B cell (primary cell): ENCODE measurements at regions of chr16 and their contacts with region 1.

Region 1: DNA sequence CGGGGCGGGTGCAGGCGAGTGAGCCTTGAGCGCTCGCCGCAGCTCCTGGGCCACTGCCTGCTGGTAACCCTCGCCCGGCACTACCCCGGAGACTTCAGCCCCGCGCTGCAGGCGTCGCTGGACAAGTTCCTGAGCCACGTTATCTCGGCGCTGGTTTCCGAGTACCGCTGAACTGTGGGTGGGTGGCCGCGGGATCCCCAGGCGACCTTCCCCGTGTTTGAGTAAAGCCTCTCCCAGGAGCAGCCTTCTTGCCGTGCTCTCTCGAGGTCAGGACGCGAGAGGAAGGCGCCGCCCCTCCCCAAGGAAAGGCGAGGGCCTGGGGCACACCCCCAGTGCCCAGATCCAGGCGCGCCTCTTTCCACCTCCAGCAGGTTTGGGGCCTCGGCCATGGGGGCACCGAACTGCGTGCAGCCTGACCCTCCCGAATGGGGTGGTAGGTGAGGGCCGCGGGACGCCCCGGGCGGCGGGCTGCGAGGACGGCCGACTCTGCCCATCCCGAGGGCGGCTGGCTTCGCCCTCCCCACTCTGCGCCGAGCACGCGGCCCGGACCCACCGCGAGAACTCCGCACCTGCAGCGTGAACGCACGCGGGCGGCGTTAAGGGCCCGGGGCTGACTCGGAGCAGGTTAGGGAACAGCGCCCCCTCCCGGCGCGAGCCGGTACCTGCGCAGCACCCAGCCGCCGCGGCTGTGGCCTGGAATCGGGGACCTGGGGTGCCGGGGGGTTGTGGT is 844 bp downstream of the HBQ1 start:
- DNase-seq: peak; percentile 87
- ATAC-seq: peak; percentile 87
- H3K4me3 ChIP-seq: peak overlapping the region in 4 of 5 experiments; percentile 23 to 46 (median 38)
- H3K4me3 Mint-ChIP-seq: peak overlapping the region; percentile 45
- H3K27ac ChIP-seq: no peak overlapping the region
- H3K27ac Mint-ChIP-seq: no peak overlapping the region
- H3K4me1 ChIP-seq: peaks cover 14 to 22% of the 10 kb centered on the region in 2 donors
- H3K4me1 Mint-ChIP-seq: peaks cover 12% of the 10 kb centered on the region
- H3K27me3 ChIP-seq: peaks cover 0 to 38% (median 22%) of the 10 kb centered on the region in 4 experiments
- H3K27me3 Mint-ChIP-seq: peaks cover 19% of the 10 kb centered on the region
- CTCF ChIP-seq: peak; percentile 96

Region 2: DNA sequence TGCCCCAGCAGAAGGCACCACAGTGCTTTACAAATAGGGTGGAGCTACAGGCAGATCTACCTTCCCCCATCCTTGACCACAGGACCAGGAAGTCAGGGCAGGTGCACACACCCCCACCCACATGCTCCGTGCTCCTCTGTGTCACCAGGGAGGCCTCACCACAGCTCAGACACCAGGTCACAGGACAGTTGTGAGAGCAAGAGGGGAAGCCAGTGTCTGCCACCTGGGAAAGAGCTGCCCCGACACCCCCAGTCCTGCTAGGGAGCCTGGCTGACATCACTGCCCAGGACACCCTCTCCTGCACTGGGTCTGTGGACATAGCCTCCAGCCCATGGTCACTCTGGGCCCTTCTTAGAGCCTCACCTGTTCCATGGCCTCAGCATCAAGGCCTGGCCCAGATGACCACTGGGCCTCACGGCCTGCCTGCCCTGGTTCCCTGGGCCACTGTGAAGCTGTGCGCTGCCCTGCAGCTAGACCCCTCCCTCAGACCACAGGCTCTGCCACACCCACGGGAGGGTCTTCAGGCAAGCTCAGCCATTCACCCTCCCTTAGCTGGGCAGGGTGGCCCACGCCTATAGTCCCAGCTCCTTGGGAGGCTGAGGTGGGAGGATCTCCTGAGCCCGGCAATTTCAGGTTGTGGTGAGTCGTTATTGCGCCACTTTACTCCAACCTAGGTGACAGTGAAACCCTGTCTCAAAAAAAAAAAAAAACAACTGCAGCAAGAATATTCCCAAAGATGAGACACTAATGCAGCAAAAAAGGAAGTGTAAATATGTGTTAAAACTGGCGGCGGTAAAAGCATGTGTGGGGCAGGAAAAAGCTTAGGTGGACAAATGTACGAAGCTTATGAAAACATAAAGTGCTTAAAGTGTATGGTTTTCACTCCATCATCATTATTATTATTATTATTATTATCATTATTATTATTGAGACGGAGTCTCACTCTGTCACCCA is 141.9 kb before region 1 on chr16:
- CTCF ChIA-PET with region 1: no interaction called
- POLR2A ChIA-PET with region 1: no interaction called
- intact Hi-C with region 1: no loop called
- DNase-seq: peak; percentile 93
- ATAC-seq: peak; percentile 86
- H3K4me3 ChIP-seq: peak overlapping the region in 1 of 5 experiments; percentile 39
- H3K4me3 Mint-ChIP-seq: peak overlapping the region; percentile 75
- H3K27ac ChIP-seq: peak overlapping the region; percentile 91 to 99
- H3K27ac Mint-ChIP-seq: peak overlapping the region; percentile 94
- H3K4me1 ChIP-seq: peaks cover 57 to 69% of the 10 kb centered on the region in 2 donors
- H3K4me1 Mint-ChIP-seq: peaks cover 73% of the 10 kb centered on the region
- H3K27me3 ChIP-seq: no peaks in the 10 kb centered on the region
- H3K27me3 Mint-ChIP-seq: no peaks in the 10 kb centered on the region
- CTCF ChIP-seq: no peak

Region 3: DNA sequence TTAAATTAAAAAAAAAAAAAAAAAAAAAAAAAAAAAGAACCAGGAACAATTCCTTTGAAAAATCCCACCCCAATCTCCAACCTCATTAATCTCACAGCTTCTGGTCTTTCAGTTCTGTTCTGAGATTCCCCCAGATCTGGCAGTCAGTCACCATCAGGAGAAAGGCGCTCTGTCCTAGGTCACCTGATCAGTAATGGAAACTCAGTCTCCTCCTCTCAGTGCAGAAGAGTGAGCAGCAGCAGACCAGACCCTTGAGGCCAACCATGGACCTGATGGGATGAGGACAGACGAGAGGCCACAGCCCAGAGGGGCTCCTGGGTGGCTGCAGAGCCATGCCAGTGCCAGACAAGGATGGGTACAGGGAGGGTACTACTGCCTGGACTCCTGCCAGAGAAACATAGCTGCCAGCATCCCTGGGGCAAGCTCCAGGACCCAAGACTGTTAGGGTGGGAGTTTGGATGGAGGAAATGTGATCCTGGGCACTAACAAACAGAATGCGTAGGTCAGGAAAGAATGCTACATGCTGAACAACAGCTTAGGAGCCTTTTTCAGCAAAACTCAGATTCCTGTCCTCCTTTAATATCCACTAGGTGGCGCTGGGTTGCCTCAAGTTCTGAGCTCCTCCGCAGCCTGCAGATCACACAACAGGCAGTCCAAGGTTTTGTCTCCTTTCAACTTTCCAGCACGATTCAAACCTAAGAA is 74.3 kb before region 1 on chr16:
- CTCF ChIA-PET with region 1: interaction called, 34 read pairs
- POLR2A ChIA-PET with region 1: no interaction called
- intact Hi-C with region 1: loop called (anchors 1 kb)
- DNase-seq: peak; percentile 78
- ATAC-seq: peak; percentile 74
- H3K4me3 ChIP-seq: no peak overlapping the region
- H3K4me3 Mint-ChIP-seq: no peak overlapping the region
- H3K27ac ChIP-seq: no peak overlapping the region
- H3K27ac Mint-ChIP-seq: no peak overlapping the region
- H3K4me1 ChIP-seq: peaks cover 0 to 3% of the 10 kb centered on the region in 2 donors
- H3K4me1 Mint-ChIP-seq: peaks cover 3% of the 10 kb centered on the region
- H3K27me3 ChIP-seq: no peaks in the 10 kb centered on the region
- H3K27me3 Mint-ChIP-seq: no peaks in the 10 kb centered on the region
- CTCF ChIP-seq: peak; percentile 82

Region 4: DNA sequence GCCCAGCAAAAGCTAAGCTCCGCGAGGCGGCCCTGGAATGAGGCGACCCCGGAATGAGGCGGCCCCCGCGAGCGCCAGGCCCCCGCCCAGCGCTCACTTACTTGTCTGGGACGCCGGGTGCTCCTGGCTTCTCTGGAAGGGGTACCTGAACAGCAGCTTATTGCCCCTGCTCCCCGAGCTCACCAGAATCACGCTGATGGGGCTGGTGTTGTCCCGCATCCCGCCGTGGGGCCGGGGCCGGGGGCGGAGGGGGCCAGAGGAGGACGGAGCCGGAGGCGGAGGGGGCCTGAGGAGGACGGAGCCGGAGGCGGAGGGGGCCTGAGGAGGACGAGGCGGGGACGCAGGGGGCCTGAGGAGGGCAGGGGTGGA is 43.1 kb before region 1 on chr16:
- CTCF ChIA-PET with region 1: interaction called, 4 read pairs
- POLR2A ChIA-PET with region 1: no interaction called
- intact Hi-C with region 1: loop called (anchors 2 kb)
- DNase-seq: peak; percentile 51
- ATAC-seq: peak; percentile 3
- H3K4me3 ChIP-seq: peak overlapping the region; percentile 38 to 79 (median 64)
- H3K4me3 Mint-ChIP-seq: peak overlapping the region; percentile 74
- H3K27ac ChIP-seq: peak overlapping the region in 1 of 2 donors; percentile 88
- H3K27ac Mint-ChIP-seq: peak overlapping the region; percentile 26
- H3K4me1 ChIP-seq: peaks cover 0 to 10% of the 10 kb centered on the region in 2 donors
- H3K4me1 Mint-ChIP-seq: peaks cover 15% of the 10 kb centered on the region
- H3K27me3 ChIP-seq: no peaks in the 10 kb centered on the region
- H3K27me3 Mint-ChIP-seq: no peaks in the 10 kb centered on the region
- CTCF ChIP-seq: no peak

Region 5: GRCh38 chr16:159136-159849 is 21.8 kb before region 1 on chr16:
- CTCF ChIA-PET with region 1: no interaction called
- POLR2A ChIA-PET with region 1: no interaction called
- intact Hi-C with region 1: no loop called
- DNase-seq: no peak
- ATAC-seq: no peak
- H3K4me3 ChIP-seq: no peak overlapping the region
- H3K4me3 Mint-ChIP-seq: no peak overlapping the region
- H3K27ac ChIP-seq: no peak overlapping the region
- H3K27ac Mint-ChIP-seq: no peak overlapping the region
- H3K4me1 ChIP-seq: peaks cover 7% of the 10 kb centered on the region in 2 donors
- H3K4me1 Mint-ChIP-seq: peaks cover 6% of the 10 kb centered on the region
- H3K27me3 ChIP-seq: peaks cover 0 to 36% (median 13%) of the 10 kb centered on the region in 4 experiments
- H3K27me3 Mint-ChIP-seq: peaks cover 38% of the 10 kb centered on the region
- CTCF ChIP-seq: no peak

Region 6: GRCh38 chr16:200388-200787 is 19.3 kb after region 1 on chr16:
- CTCF ChIA-PET with region 1: no interaction called
- POLR2A ChIA-PET with region 1: interaction called, 13 read pairs
- intact Hi-C with region 1: no loop called
- DNase-seq: no peak
- ATAC-seq: no peak
- H3K4me3 ChIP-seq: no peak overlapping the region
- H3K4me3 Mint-ChIP-seq: no peak overlapping the region
- H3K27ac ChIP-seq: no peak overlapping the region
- H3K27ac Mint-ChIP-seq: no peak overlapping the region
- H3K4me1 ChIP-seq: no peaks in the 10 kb centered on the region
- H3K4me1 Mint-ChIP-seq: no peaks in the 10 kb centered on the region
- H3K27me3 ChIP-seq: no peaks in the 10 kb centered on the region
- H3K27me3 Mint-ChIP-seq: no peaks in the 10 kb centered on the region
- CTCF ChIP-seq: no peak